Endothelial cell of umbilical vein (primary cell): ENCODE measurements at regions of chr7 and their contacts with region 1.

Region 1: GRCh38 chr7:24979863-24980533 is at the start of gene OSBPL3:
- DNase-seq: peak; percentile 95
- H3K4me3 ChIP-seq: peak within 1 kb of the TSS; percentile 71 to 82 (median 75)
- H3K27ac ChIP-seq: peak within 1 kb of the TSS; percentile 65
- H3K4me1 ChIP-seq: peaks cover 38% of the 10 kb centered on the region
- H3K27me3 ChIP-seq: no peaks in the 10 kb centered on the region
- CTCF ChIP-seq: no peak
- POLR2A ChIP-seq: peak; percentile 58
- total RNA-seq, gene OSBPL3: 27.1 and 31.3 TPM in 2 replicates

Region 2: GRCh38 chr7:24836084-24836483 is 143.9 kb before region 1 on chr7:
- CTCF ChIA-PET with region 1: interaction called, 12 read pairs
- POLR2A ChIA-PET with region 1: no interaction called
- dilution Hi-C with region 1: no loop called
- intact Hi-C with region 1: loop called (anchors 5 kb)
- DNase-seq: no peak
- H3K4me3 ChIP-seq: no peak overlapping the region
- H3K27ac ChIP-seq: no peak overlapping the region
- H3K4me1 ChIP-seq: peaks cover 16% of the 10 kb centered on the region
- H3K27me3 ChIP-seq: no peaks in the 10 kb centered on the region
- CTCF ChIP-seq: no peak
- POLR2A ChIP-seq: no peak

Region 3: DNA sequence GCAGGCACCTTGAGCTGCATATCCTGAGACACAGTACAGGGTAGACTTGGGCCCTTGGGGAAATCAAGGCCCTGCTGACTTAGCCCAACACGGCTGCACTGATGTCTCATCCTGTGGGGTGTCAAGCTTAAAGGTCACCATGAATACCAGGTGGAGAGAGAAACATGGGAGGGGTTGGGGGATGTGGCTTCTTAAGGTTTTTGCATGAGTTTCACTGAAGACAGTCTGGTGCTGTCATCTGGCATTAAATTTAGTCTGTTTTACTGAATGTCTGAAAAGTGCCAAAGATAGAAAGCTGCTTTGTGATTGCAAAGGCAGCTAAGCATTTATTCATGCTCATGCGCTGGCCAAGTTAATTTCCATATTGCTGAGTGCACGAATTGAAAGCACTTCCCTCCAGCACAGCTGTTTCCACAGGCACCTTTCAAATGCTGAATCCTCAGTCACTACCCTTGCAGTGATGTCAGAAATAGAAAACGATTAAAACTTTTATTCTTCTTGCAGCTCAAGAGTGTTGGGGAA is 102.1 kb before region 1 on chr7:
- CTCF ChIA-PET with region 1: interaction called, 19 read pairs
- POLR2A ChIA-PET with region 1: no interaction called
- dilution Hi-C with region 1: no loop called
- intact Hi-C with region 1: no loop called
- DNase-seq: no peak
- H3K4me3 ChIP-seq: no peak overlapping the region
- H3K27ac ChIP-seq: no peak overlapping the region
- H3K4me1 ChIP-seq: peaks cover 5% of the 10 kb centered on the region
- H3K27me3 ChIP-seq: no peaks in the 10 kb centered on the region
- CTCF ChIP-seq: no peak
- POLR2A ChIP-seq: no peak

Region 4: GRCh38 chr7:24896031-24896501 is 83.9 kb before region 1 on chr7:
- CTCF ChIA-PET with region 1: interaction called, 34 read pairs
- POLR2A ChIA-PET with region 1: no interaction called
- dilution Hi-C with region 1: no loop called
- intact Hi-C with region 1: no loop called
- DNase-seq: no peak
- H3K4me3 ChIP-seq: no peak overlapping the region
- H3K27ac ChIP-seq: no peak overlapping the region
- H3K4me1 ChIP-seq: peaks cover 13% of the 10 kb centered on the region
- H3K27me3 ChIP-seq: no peaks in the 10 kb centered on the region
- CTCF ChIP-seq: no peak
- POLR2A ChIP-seq: no peak

Region 5: DNA sequence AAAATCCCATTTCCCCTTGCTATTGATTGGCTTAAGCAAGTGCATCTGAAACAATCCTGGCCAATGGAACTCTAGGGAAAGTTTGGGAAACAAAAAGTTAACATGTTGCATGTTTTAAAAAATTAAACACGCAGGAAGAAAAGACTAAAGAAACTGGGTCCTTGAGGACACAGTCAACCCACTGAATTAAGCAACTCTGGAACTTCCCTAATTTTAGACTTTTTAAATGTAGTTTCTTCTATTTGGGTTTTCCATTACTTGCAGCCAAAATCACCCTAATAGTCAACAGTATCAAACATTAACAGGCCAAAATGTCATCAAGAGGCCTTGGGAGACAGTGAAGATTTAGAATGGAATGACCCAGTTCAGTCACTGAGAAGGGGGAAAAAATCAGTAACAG is 40.6 kb before region 1 on chr7:
- CTCF ChIA-PET with region 1: no interaction called
- POLR2A ChIA-PET with region 1: no interaction called
- dilution Hi-C with region 1: no loop called
- intact Hi-C with region 1: no loop called
- DNase-seq: no peak
- H3K4me3 ChIP-seq: no peak overlapping the region
- H3K27ac ChIP-seq: no peak overlapping the region
- H3K4me1 ChIP-seq: no peaks in the 10 kb centered on the region
- H3K27me3 ChIP-seq: no peaks in the 10 kb centered on the region
- CTCF ChIP-seq: no peak
- POLR2A ChIP-seq: no peak

Region 6: GRCh38 chr7:25028370-25029021 is 48.5 kb after region 1 on chr7:
- CTCF ChIA-PET with region 1: interaction called, 6 read pairs
- POLR2A ChIA-PET with region 1: no interaction called
- dilution Hi-C with region 1: no loop called
- intact Hi-C with region 1: loop called (anchors 1 kb)
- DNase-seq: peak; percentile 78
- H3K4me3 ChIP-seq: no peak overlapping the region
- H3K27ac ChIP-seq: peak overlapping the region; percentile 95
- H3K4me1 ChIP-seq: peaks cover 38% of the 10 kb centered on the region
- H3K27me3 ChIP-seq: no peaks in the 10 kb centered on the region
- CTCF ChIP-seq: no peak
- POLR2A ChIP-seq: no peak